H1 (cell line): ENCODE measurements at regions of chr14 and their contacts with region 1.

Region 1: DNA sequence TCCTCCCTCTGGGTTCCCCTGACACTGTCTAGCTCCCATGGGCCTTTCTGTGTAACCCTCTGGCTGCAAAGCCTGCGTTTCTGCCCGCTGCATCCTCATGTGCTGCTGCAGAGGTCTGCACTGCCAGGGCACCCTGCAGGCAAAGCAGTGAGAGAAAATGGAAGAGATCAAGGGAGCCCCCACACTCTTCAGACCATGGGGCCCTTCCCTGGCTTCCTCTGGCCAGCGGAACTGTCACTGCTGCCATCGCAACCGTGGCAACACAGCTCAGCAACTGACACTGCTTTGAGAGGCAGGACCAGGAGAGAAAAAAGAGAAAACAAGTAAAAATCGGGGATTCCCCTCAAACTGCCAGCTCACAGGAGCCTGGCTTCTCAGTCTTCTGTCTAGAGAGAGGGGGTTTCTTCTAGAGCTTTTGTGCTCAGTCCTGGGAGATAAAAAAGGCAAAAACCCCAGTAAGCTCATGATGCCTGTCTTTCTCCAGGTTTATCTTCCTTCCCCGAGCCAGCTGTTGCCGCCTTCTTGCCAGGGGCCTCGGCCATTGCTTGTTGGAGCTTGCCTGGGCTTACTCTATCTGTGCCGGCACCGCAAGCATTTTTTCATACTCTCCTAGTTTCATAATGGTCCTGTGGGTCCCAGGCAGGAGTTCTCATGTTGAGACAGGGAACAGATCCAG is 39.0 kb downstream of the C14orf132 start:
- DNase-seq: no peak
- H3K4me3 ChIP-seq: no peak overlapping the region
- H3K27ac ChIP-seq: no peak overlapping the region
- H3K4me1 ChIP-seq: no peaks in the 10 kb centered on the region
- H3K27me3 ChIP-seq: no peaks in the 10 kb centered on the region
- CTCF ChIP-seq: no peak
- EP300 ChIP-seq: no peak
- POLR2A ChIP-seq: no peak
- RAD21 ChIP-seq: no peak

Region 2: GRCh38 chr14:96065664-96066459 is 12.3 kb before region 1 on chr14:
- CTCF ChIA-PET with region 1: interaction called, 23 read pairs
- POLR2A ChIA-PET with region 1: interaction called, 3 read pairs
- DNase-seq: no peak
- H3K4me3 ChIP-seq: no peak overlapping the region
- H3K27ac ChIP-seq: no peak overlapping the region
- H3K4me1 ChIP-seq: no peaks in the 10 kb centered on the region
- H3K27me3 ChIP-seq: no peaks in the 10 kb centered on the region
- CTCF ChIP-seq: no peak
- EP300 ChIP-seq: no peak
- POLR2A ChIP-seq: no peak
- RAD21 ChIP-seq: no peak

Region 3: GRCh38 chr14:96146131-96146806 is 68.1 kb after region 1 on chr14:
- CTCF ChIA-PET with region 1: no interaction called
- POLR2A ChIA-PET with region 1: no interaction called
- DNase-seq: peak in 1 of 2 experiments; percentile 30
- H3K4me3 ChIP-seq: no peak overlapping the region
- H3K27ac ChIP-seq: no peak overlapping the region
- H3K4me1 ChIP-seq: no peaks in the 10 kb centered on the region
- H3K27me3 ChIP-seq: no peaks in the 10 kb centered on the region
- CTCF ChIP-seq: no peak
- EP300 ChIP-seq: no peak
- POLR2A ChIP-seq: no peak
- RAD21 ChIP-seq: no peak